ENCODE measurements at regions of chr1 and their contacts with region 1.

Region 1: GRCh38 chr1:15741183-15741850 is 982 bp upstream of the TMEM82 start:
- DNase-seq: peak; percentile 91
- CTCF ChIP-seq: peak; percentile 96

Region 2: DNA sequence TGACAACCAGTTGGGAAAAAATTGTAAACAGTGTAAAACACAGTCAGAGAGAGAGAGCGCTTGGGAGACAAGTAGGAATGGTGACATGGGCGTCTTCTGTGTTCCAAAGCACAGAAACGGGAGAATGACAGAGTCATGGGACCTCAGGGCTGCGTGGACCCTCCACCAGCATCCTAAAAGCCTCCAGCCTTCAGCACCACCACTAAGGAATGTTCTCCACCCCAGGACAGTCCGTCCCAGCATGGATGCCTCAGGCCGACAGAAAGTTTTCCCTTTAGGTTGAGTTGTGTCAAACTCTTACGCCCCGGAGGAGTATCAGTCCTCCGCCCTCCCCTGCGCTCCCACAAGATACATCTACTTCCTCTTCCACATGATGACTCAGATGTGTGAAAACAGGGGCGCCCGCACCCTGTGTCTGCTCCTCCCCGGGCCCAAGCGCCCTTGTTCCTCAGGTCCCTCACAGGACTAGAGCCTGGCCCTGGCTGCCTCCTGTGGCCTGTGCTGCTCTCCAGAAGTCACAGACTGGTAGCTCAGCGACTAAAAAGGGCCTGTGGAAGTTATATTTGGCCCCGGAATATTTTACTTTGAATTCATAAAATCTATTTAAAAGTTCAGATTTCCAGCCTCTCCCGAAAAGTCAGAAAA is 395.5 kb before region 1 on chr1:
- in situ Hi-C with region 1: loop called (anchors 25 kb)
- DNase-seq: peak; percentile 77
- CTCF ChIP-seq: no peak

Region 3: GRCh38 chr1:15465674-15466073 is 275.6 kb before region 1 on chr1:
- in situ Hi-C with region 1: no loop called
- DNase-seq: no peak
- CTCF ChIP-seq: no peak

Region 4: GRCh38 chr1:15598436-15598835 is 142.9 kb before region 1 on chr1:
- in situ Hi-C with region 1: loop called (anchors 10 kb)
- DNase-seq: no peak
- CTCF ChIP-seq: no peak